ENCODE measurements at regions of chr5 and their contacts with region 1.

Region 1: DNA sequence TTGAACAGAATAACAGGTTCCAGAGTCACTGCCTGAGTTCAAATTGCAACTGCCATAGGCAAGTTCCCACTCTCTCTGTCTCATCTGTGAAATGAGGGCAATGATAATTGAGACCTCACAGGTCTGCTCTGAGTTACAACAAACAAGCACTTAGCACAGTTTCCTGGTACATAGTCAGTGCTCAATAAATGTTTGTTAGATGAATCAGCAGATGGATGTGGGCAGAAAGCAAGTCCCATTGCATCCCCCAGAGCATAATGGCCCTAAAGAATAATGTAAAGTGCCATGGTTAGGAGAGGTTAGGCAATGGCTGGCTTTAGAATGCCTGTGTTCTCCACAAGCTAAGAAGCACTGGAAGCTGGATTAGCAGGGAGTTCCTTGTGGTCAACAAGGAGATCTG is 136.5 kb upstream of the LARP1 start:
- DNase-seq: no peak
- ATAC-seq: no peak
- H3K4me3 ChIP-seq: no peak overlapping the region
- H3K4me3 Mint-ChIP-seq: no peak overlapping the region
- H3K27ac ChIP-seq: no peak overlapping the region
- H3K27ac Mint-ChIP-seq: no peak overlapping the region
- H3K4me1 ChIP-seq: no peaks in the 10 kb centered on the region
- H3K4me1 Mint-ChIP-seq: no peaks in the 10 kb centered on the region
- H3K27me3 ChIP-seq: peaks cover 0 to 7% (median 0%) of the 10 kb centered on the region in 4 experiments
- H3K27me3 Mint-ChIP-seq: peaks cover 16% of the 10 kb centered on the region
- CTCF ChIP-seq: no peak

Region 2: GRCh38 chr5:154916884-154917283 is 298.2 kb after region 1 on chr5:
- CTCF ChIA-PET with region 1: no interaction called
- POLR2A ChIA-PET with region 1: interaction called, 10 read pairs
- intact Hi-C with region 1: no loop called
- DNase-seq: no peak
- ATAC-seq: no peak
- H3K4me3 ChIP-seq: no peak overlapping the region
- H3K4me3 Mint-ChIP-seq: no peak overlapping the region
- H3K27ac ChIP-seq: no peak overlapping the region
- H3K27ac Mint-ChIP-seq: no peak overlapping the region
- H3K4me1 ChIP-seq: no peaks in the 10 kb centered on the region
- H3K4me1 Mint-ChIP-seq: no peaks in the 10 kb centered on the region
- H3K27me3 ChIP-seq: no peaks in the 10 kb centered on the region
- H3K27me3 Mint-ChIP-seq: no peaks in the 10 kb centered on the region
- CTCF ChIP-seq: no peak

Measured in B cell (primary cell).